Activated naive CD4-positive, alpha-beta T cell treated with anti-CD3 and anti-CD28 coated beads for 36 hours (primary cell): ENCODE measurements at regions of chrX and their contacts with region 1.

Region 1: GRCh38 chrX:70554081-70554480 is 109.4 kb downstream of the DLG3 start:
- DNase-seq: no peak
- H3K4me3 Mint-ChIP-seq: no peak overlapping the region
- H3K27ac Mint-ChIP-seq: no peak overlapping the region
- H3K4me1 Mint-ChIP-seq: peaks cover 7% of the 10 kb centered on the region
- H3K27me3 Mint-ChIP-seq: no peaks in the 10 kb centered on the region

Region 2: DNA sequence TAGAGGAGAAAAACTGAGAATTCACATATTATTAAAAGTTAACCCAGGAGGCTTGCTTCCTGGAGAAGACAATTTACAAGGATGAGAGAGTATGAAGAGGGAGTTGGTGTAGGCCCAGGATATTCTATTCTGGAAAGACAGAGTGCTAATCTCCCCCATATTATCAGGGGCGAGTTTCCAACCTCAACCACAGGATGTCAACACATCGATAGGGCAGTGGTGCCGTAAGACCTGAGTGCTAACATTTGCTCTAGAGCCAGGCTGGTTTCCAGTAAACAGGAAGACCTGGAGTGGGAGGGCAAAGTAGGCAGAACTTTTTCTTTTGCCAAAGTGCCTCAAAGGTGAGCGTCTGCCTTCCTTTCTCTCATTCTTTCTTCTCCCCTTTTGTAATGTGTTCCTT is 322.4 kb before region 1 on chrX:
- CTCF ChIA-PET with region 1: no interaction called
- intact Hi-C with region 1: no loop called
- DNase-seq: no peak
- H3K4me3 Mint-ChIP-seq: no peak overlapping the region
- H3K27ac Mint-ChIP-seq: no peak overlapping the region
- H3K4me1 Mint-ChIP-seq: peaks cover 5% of the 10 kb centered on the region
- H3K27me3 Mint-ChIP-seq: no peaks in the 10 kb centered on the region

Region 3: GRCh38 chrX:70592091-70592490 is 38.0 kb after region 1 on chrX:
- CTCF ChIA-PET with region 1: no interaction called
- intact Hi-C with region 1: loop called (anchors 2 kb)
- DNase-seq: peak; percentile 63
- H3K4me3 Mint-ChIP-seq: no peak overlapping the region
- H3K27ac Mint-ChIP-seq: peak overlapping the region; percentile 36
- H3K4me1 Mint-ChIP-seq: peaks cover 12% of the 10 kb centered on the region
- H3K27me3 Mint-ChIP-seq: no peaks in the 10 kb centered on the region

Region 4: GRCh38 chrX:70664726-70665125 is 110.6 kb after region 1 on chrX:
- CTCF ChIA-PET with region 1: no interaction called
- intact Hi-C with region 1: loop called (anchors 5 kb)
- DNase-seq: peak; percentile 6
- H3K4me3 Mint-ChIP-seq: no peak overlapping the region
- H3K27ac Mint-ChIP-seq: no peak overlapping the region
- H3K4me1 Mint-ChIP-seq: no peaks in the 10 kb centered on the region
- H3K27me3 Mint-ChIP-seq: no peaks in the 10 kb centered on the region